Activated CD8-positive, alpha-beta T cell treated with anti-CD3 and anti-CD28 coated beads, Interleukin-2, amount 10 ng/mL, durations not matched to agents 7 days and 5 days (primary cell): ENCODE measurements at regions of chr17 and their contacts with region 1.

Region 1: GRCh38 chr17:45277216-45277849 is 15.4 kb upstream of the SPATA32 start:
- DNase-seq: peak; percentile 93
- ATAC-seq: peak; percentile 91
- H3K4me3 Mint-ChIP-seq: no peak overlapping the region
- H3K27ac Mint-ChIP-seq: peak overlapping the region; percentile 3
- H3K4me1 Mint-ChIP-seq: peaks cover 17% of the 10 kb centered on the region
- H3K27me3 Mint-ChIP-seq: no peaks in the 10 kb centered on the region

Region 2: GRCh38 chr17:45098869-45099616 is 178.3 kb before region 1 on chr17:
- CTCF ChIA-PET with region 1: no interaction called
- POLR2A ChIA-PET with region 1: no interaction called
- DNase-seq: peak; percentile 82
- ATAC-seq: peak; percentile 93
- H3K4me3 Mint-ChIP-seq: no peak overlapping the region
- H3K27ac Mint-ChIP-seq: no peak overlapping the region
- H3K4me1 Mint-ChIP-seq: no peaks in the 10 kb centered on the region
- H3K27me3 Mint-ChIP-seq: no peaks in the 10 kb centered on the region

Region 3: GRCh38 chr17:45247429-45248131 is 29.8 kb before region 1 on chr17:
- CTCF ChIA-PET with region 1: interaction called, 15 read pairs
- POLR2A ChIA-PET with region 1: interaction called, 8 read pairs
- DNase-seq: peak; percentile 99
- ATAC-seq: peak; percentile 92
- H3K4me3 Mint-ChIP-seq: peak overlapping the region; percentile 91
- H3K27ac Mint-ChIP-seq: peak overlapping the region; percentile 97
- H3K4me1 Mint-ChIP-seq: peaks cover 75% of the 10 kb centered on the region
- H3K27me3 Mint-ChIP-seq: no peaks in the 10 kb centered on the region

Region 4: GRCh38 chr17:45261577-45262515 is 15.5 kb before region 1 on chr17 and contains the start of gene SPATA32:
- CTCF ChIA-PET with region 1: interaction called, 13 read pairs
- POLR2A ChIA-PET with region 1: no interaction called
- DNase-seq: peak; percentile 85
- ATAC-seq: peak; percentile 88
- H3K4me3 Mint-ChIP-seq: peak within 1 kb of the TSS; percentile 80
- H3K27ac Mint-ChIP-seq: peak within 1 kb of the TSS; percentile 91
- H3K4me1 Mint-ChIP-seq: peaks cover 37% of the 10 kb centered on the region
- H3K27me3 Mint-ChIP-seq: no peaks in the 10 kb centered on the region
- total RNA-seq, gene SPATA32: 0.52 to 0.55 TPM

Region 5: GRCh38 chr17:45299339-45299738 is 22.0 kb after region 1 on chr17:
- CTCF ChIA-PET with region 1: interaction called, 41 read pairs
- POLR2A ChIA-PET with region 1: no interaction called
- DNase-seq: no peak
- ATAC-seq: no peak
- H3K4me3 Mint-ChIP-seq: no peak overlapping the region
- H3K27ac Mint-ChIP-seq: peak overlapping the region; percentile 77
- H3K4me1 Mint-ChIP-seq: peaks cover 86% of the 10 kb centered on the region
- H3K27me3 Mint-ChIP-seq: no peaks in the 10 kb centered on the region

Region 6: GRCh38 chr17:45317112-45317928 is 40.0 kb after region 1 on chr17:
- CTCF ChIA-PET with region 1: interaction called, 73 read pairs
- POLR2A ChIA-PET with region 1: interaction called, 17 read pairs
- DNase-seq: peak; percentile 100
- ATAC-seq: peak; percentile 90
- H3K4me3 Mint-ChIP-seq: peak overlapping the region; percentile 83
- H3K27ac Mint-ChIP-seq: peak overlapping the region; percentile 93
- H3K4me1 Mint-ChIP-seq: peaks cover 73% of the 10 kb centered on the region
- H3K27me3 Mint-ChIP-seq: no peaks in the 10 kb centered on the region

Region 7: DNA sequence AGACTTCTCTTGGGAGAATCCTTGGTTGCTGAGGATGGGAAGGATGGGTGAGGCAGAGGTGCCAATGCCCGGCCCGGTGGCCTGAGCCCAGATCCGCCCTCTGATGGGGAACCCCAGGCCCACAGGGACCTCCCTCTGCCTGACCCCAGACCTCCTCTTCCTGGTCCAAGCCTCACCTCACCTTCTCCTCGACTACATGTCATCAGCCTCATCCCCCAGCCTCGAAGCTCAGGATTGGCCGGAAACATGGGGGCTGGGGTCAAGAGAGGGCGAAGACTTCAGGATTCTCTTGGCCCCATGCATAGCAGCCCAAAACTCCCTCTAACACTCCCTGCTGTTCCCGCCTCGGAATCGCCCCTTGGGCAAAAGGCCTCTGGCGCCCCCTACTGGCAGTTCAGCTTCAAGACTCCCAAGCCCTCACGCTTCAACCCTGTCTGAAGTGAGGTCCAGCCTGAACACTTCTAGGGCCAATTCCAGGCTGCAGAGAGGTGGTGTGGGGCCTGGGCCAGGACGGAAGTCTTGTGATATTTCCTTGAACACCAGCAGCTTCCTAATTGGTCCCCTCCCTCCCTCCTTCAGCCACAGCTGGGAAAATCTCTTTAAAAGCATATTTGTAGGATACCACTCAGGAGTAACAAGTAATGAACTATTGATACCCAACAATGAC is 108.1 kb after region 1 on chr17:
- CTCF ChIA-PET with region 1: interaction called, 199 read pairs
- POLR2A ChIA-PET with region 1: interaction called, 5 read pairs
- DNase-seq: peak; percentile 93
- ATAC-seq: peak; percentile 95
- H3K4me3 Mint-ChIP-seq: no peak overlapping the region
- H3K27ac Mint-ChIP-seq: peak overlapping the region; percentile 74
- H3K4me1 Mint-ChIP-seq: peaks cover 33% of the 10 kb centered on the region
- H3K27me3 Mint-ChIP-seq: peaks cover 5% of the 10 kb centered on the region